GM23248 (cell line): ENCODE measurements at regions of chr12 and their contacts with region 1.

Region 1: DNA sequence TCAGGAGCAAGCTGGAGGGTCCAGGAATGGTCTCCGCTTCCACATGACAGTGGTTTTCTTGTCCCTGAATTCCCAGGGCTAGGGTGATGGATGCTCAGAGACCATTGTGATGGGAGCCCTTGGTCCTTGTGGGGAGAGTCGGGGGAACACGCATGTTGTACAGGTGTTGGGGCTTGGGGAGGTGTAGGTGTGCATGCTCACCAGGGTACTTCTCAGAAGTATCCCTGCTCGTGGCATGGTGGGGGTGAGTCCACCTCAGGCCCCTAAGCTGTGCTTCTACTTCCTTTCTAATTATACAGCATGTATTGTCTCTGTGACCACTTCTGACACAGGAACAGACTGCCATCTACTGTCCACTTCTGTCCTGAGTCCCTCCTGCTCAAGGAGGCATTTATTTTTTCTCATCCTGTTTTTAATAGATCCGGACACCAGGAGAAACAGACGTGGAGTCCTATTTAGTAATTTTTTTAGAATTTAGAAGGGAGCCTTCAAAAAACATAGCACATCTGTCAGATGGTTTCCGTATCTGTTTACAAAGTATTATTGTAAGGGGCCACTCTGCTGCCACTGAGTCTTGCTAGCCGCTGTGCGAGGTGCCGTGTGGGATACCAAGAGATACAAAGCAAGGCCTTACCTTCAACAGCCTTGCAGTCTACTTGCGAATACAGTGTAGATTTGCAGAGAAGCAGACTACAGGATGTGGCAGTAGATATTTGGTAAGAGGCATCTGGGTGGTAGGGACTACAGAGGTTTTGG is 10.5 kb downstream of the NTF3 start:
- DNase-seq: peak; percentile 78
- H3K4me3 ChIP-seq: no peak overlapping the region
- H3K27ac ChIP-seq: no peak overlapping the region
- H3K4me1 ChIP-seq: peaks cover 39% of the 10 kb centered on the region
- H3K27me3 ChIP-seq: no peaks in the 10 kb centered on the region; the same call in none of the 2 replicates

Region 2: DNA sequence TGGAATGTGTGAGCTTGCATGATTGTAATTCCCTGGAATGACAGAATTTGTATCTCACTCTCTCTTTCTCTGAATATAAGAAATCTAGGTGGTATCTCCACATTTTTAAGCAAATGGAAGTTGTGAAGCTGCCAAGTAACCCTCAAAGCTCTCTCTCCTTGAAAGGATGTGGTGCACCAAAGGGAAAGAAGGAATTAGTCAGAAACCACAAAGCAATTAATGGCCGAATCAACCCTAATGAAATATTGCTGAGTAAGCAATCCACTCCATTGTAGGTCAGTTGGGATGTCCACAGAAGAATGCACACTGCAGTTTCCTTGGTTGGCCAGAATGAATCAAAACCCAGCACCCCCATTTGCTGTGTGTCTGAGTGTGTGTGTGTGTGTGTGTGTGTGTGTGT is 245.3 kb before region 1 on chr12:
- in situ Hi-C with region 1: loop called (anchors 25 kb)
- DNase-seq: peak; percentile 35
- H3K4me3 ChIP-seq: no peak overlapping the region
- H3K27ac ChIP-seq: no peak overlapping the region
- H3K4me1 ChIP-seq: no peaks in the 10 kb centered on the region; the same call in 1 of the 2 replicates
- H3K27me3 ChIP-seq: peaks cover 3% of the 10 kb centered on the region; the same call in 1 of the 2 replicates